PC-9 (cell line): ENCODE measurements at regions of chr3 and their contacts with region 1.

Region 1: GRCh38 chr3:187955076-187955952 is 198.6 kb upstream of the LPP start:
- DNase-seq: peak; percentile 53 to 98
- H3K4me3 ChIP-seq: peak overlapping the region; percentile 23
- H3K27ac ChIP-seq: peak overlapping the region; percentile 90
- H3K4me1 ChIP-seq: peaks cover 71% of the 10 kb centered on the region
- H3K27me3 ChIP-seq: no peaks in the 10 kb centered on the region
- CTCF ChIP-seq: no peak

Region 2: DNA sequence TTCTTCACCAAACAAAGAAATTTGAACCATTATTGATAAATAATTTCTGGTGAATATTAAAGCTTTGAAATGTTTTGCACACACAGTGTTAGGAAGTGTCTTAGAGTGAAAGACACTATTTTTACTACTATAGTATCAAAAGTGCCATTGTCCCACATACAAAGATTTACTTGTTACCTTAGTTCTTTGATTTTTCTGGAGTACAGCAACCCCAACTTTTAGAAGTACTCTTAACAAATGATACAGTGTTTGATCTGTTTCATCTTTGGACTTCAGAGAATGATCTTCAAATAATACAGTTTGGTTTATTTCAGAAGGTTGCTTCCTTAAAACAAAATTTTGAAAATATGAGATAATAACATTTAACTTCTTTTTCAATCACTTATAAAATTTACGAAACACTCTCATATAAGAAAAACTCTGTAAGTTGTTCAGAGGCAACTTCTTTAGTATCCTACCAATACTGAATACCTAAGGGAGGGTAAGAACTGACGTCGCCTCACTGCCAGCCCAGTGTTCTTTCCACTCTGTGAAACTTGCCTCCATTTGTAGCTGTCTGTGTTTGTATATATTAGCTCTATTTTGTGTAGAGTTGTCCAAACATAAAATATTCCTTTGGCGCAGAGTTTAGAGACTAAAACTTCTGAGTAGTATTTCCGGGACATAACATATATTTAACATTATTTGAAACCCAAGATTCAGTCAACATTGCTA is 662.8 kb after region 1 on chr3:
- CTCF ChIA-PET with region 1: no interaction called
- POLR2A ChIA-PET with region 1: interaction called, 29 read pairs
- intact Hi-C with region 1: no loop called
- DNase-seq: no peak
- H3K4me3 ChIP-seq: no peak overlapping the region
- H3K27ac ChIP-seq: no peak overlapping the region
- H3K4me1 ChIP-seq: no peaks in the 10 kb centered on the region
- H3K27me3 ChIP-seq: no peaks in the 10 kb centered on the region
- CTCF ChIP-seq: no peak